Naive thymus-derived CD4-positive, alpha-beta T cell (primary cell): ENCODE measurements at regions of chr10 and their contacts with region 1.

Region 1: GRCh38 chr10:80477813-80478212 is 23.7 kb downstream of the TSPAN14 start:
- DNase-seq: no peak
- ATAC-seq: peak; percentile 50
- H3K4me3 ChIP-seq: no peak overlapping the region
- H3K4me3 Mint-ChIP-seq: peak overlapping the region in 7 of 10 donors; percentile 0 to 57 (median 26)
- H3K27ac ChIP-seq: peak overlapping the region; percentile 18
- H3K27ac Mint-ChIP-seq: peak overlapping the region; percentile 26 to 99 (median 81)
- H3K4me1 ChIP-seq: peaks cover 44 to 64% of the 10 kb centered on the region in 2 donors
- H3K4me1 Mint-ChIP-seq: peaks cover 49 to 87% (median 76%) of the 10 kb centered on the region in 7 donors
- H3K27me3 ChIP-seq: no peaks in the 10 kb centered on the region
- H3K27me3 Mint-ChIP-seq: no peaks in the 10 kb centered on the region

Region 2: DNA sequence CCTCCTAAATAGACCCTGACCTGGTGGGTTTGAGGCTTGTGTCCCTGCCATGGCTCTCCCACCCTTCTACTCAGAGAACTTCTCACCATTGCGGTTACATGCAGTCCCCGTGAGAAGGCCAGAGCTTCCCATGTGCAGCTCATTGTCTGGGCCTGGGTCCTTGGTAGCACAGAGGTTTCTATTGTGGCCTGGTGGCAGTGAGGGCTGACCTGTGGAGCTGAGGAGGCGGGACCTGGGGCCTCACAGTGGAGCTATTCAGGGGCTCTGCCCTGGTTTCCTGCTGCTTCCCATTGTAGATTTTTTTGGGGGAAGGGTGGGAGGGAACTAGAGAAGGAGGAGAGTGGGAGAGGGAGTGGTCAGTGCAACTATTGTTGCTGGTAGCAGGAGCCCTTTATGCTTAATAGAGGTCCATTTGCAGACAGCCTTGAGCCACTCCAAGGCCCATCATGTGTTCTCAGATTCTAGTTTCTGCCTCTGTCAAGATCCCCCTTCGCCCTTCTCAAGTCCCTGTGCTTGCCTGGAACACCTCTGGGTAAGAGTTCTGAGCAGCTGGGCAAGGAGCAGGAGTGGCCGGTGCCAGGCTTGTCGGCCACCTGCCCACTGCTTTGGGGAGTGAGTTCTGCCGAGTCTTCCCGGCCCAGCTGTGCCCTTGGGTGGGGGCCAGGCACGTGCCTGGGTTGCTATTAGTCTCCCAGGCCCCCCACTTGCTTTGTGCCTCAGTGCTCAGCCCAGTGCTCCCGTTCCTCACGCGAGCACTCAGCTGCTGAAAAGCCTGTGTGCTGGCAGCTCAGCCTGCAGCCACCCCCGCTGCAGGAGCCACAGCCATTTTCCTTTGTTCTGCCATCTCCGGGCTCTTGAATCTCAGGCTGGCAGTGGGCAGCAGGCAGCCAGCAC is 13.0 kb before region 1 on chr10:
- CTCF ChIA-PET with region 1: interaction called, 4 read pairs
- POLR2A ChIA-PET with region 1: interaction called, 608 read pairs
- intact Hi-C with region 1: loop called in 1 of 2 experiments (anchors 1 kb)
- DNase-seq: peak in 2 of 9 donors; percentile 46 to 47
- ATAC-seq: peak; percentile 11
- H3K4me3 ChIP-seq: peak overlapping the region; percentile 57
- H3K4me3 Mint-ChIP-seq: peak overlapping the region; percentile 79 to 99 (median 88)
- H3K27ac ChIP-seq: peak overlapping the region; percentile 84
- H3K27ac Mint-ChIP-seq: peak overlapping the region; percentile 87 to 99 (median 98)
- H3K4me1 ChIP-seq: peaks cover 88 to 97% of the 10 kb centered on the region in 2 donors
- H3K4me1 Mint-ChIP-seq: peaks cover 75 to 100% (median 95%) of the 10 kb centered on the region in 7 donors
- H3K27me3 ChIP-seq: no peaks in the 10 kb centered on the region
- H3K27me3 Mint-ChIP-seq: no peaks in the 10 kb centered on the region

Region 3: DNA sequence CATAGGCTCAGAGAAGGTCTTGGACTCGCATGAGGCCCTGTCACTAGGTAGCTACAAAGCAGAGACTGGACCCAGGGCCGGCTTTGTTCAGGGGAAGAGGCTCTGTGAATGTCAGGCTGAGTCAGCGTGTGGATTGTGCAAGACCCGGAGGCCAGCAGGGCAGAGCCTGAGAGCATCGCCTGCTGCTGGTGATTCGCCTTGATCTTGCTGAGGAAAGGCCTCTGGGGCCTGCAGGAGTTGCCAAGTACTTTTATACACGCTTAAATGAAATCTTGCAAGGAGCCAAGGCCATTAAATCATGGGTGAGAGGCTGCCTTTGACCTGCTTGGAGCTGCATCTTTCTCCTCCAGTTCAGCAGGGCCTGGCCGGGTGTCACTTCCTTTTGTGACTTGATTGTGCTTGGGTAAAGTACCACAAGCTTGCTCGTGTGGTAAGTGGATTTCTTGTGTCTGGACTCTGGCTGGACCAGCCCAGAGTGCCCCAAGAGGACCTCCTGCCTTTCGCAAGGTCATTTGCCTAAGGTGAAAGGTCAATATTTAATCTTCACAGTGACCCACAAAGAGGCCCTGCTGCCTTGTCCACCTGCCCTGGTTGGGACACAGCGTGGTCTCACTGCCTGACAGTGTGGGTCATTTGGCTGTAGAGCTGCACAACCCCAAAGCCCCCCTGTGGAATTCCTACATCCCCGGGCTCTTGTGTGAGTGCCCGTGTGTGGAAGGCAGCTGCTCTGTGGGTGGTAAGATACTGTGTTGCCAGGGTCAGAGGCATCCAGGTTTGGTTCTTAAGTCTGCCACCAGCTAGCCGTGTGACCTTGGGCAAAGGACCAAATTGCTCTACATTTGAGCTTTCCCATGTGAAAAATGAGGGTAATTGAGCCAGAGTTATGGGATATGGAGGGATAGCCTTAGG is 21.3 kb after region 1 on chr10:
- CTCF ChIA-PET with region 1: interaction called, 839 read pairs
- POLR2A ChIA-PET with region 1: interaction called, 608 read pairs
- intact Hi-C with region 1: no loop called
- DNase-seq: peak in 2 of 9 donors; percentile 32 to 61
- ATAC-seq: peak; percentile 73
- H3K4me3 ChIP-seq: peak overlapping the region; percentile 33
- H3K4me3 Mint-ChIP-seq: peak overlapping the region; percentile 76 to 92 (median 82)
- H3K27ac ChIP-seq: peak overlapping the region; percentile 59
- H3K27ac Mint-ChIP-seq: peak overlapping the region; percentile 85 to 99 (median 90)
- H3K4me1 ChIP-seq: peaks cover 93 to 99% of the 10 kb centered on the region in 2 donors
- H3K4me1 Mint-ChIP-seq: peaks cover 89 to 100% (median 98%) of the 10 kb centered on the region in 7 donors
- H3K27me3 ChIP-seq: no peaks in the 10 kb centered on the region
- H3K27me3 Mint-ChIP-seq: no peaks in the 10 kb centered on the region